CD8-positive, alpha-beta T cell (primary cell): ENCODE measurements at regions of chr9 and their contacts with region 1.

Region 1: DNA sequence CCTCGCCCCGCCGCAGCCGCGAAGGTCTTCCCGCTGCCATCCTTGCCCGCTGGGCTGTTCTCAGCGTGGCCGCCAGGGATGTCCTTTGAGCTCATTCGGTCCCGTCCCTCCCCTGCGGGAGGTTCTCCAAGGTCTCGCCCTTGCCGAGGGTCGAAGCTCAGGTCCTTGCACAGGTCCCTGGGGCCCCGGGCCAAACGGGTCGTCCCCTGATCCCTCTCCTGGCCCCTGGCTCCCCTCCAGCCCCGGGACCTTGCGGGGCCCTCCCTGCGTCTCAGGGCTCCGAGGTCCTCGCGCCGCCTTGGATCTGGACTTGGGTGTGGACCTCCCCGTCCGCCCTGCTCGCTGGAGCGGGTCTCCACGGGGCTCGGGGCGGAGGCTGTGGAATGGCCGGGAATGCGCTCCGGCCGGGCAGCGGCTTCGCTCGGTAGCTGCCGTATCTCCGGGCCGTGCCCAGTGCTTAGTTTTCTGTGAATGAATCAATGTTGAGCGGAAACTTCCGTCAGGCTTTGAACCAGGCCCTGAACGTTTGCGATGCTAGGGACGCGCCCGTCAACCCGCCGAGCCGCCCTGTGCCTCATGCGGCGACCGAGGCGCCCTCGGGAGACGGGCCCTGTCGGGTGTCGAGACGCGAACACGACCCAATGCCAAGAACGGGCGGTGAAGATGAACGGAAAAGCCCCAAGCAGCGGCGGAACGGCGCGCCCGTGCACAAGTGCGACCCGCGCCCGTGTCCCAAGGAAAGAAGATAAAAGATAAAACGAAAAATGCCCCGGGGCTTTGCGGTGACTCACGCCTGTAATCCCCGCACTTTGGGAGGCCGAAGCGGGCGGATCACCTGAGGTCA is 789 bp downstream of the RNU6ATAC start:
- DNase-seq: peak; percentile 38 to 87 (median 68)
- ATAC-seq: peak; percentile 19
- H3K4me3 ChIP-seq: no peak overlapping the region
- H3K4me3 Mint-ChIP-seq: no peak overlapping the region
- H3K27ac ChIP-seq: no peak overlapping the region
- H3K27ac Mint-ChIP-seq: no peak overlapping the region
- H3K4me1 ChIP-seq: peaks cover 18% of the 10 kb centered on the region
- H3K4me1 Mint-ChIP-seq: peaks cover 17% of the 10 kb centered on the region
- H3K27me3 ChIP-seq: no peaks in the 10 kb centered on the region
- H3K27me3 Mint-ChIP-seq: no peaks in the 10 kb centered on the region
- CTCF ChIP-seq: peak; percentile 32

Region 2: GRCh38 chr9:133459476-133460404 is 703.8 kb before region 1 on chr9 and contains the start of gene CACFD1:
- CTCF ChIA-PET with region 1: no interaction called
- POLR2A ChIA-PET with region 1: no interaction called
- intact Hi-C with region 1: loop called in 1 of 2 experiments (anchors 10 kb)
- DNase-seq: peak; percentile 77 to 96 (median 93)
- ATAC-seq: peak; percentile 80
- H3K4me3 ChIP-seq: peak within 1 kb of the TSS; percentile 71 to 76
- H3K4me3 Mint-ChIP-seq: peak within 1 kb of the TSS; percentile 87
- H3K27ac ChIP-seq: peak within 1 kb of the TSS; percentile 74 to 80
- H3K27ac Mint-ChIP-seq: peak within 1 kb of the TSS; percentile 97
- H3K4me1 ChIP-seq: peaks cover 14% of the 10 kb centered on the region
- H3K4me1 Mint-ChIP-seq: peaks cover 12% of the 10 kb centered on the region
- H3K27me3 ChIP-seq: no peaks in the 10 kb centered on the region
- H3K27me3 Mint-ChIP-seq: no peaks in the 10 kb centered on the region
- CTCF ChIP-seq: no peak
- total RNA-seq, gene CACFD1: 7.4 to 9.7 TPM

Region 3: DNA sequence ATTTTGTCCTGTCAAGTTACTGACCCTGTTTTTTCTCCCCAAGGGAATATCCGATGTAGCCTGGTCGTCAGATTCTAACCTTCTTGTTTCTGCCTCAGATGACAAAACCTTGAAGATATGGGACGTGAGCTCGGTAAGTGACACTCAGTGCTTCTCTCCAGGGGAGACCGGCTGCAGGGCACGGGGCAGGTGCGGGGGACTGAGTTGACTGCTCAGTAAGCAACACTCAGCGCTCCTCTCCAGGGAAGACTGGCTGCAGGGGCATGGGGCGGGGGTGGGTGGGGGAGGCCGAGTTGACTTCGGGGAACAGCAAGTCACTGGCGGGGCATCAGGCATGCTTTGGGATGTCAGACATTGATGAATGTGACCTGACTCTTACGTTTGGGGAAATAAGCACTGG is 21.7 kb before region 1 on chr9:
- CTCF ChIA-PET with region 1: interaction called, 11 read pairs
- POLR2A ChIA-PET with region 1: interaction called, 43 read pairs
- intact Hi-C with region 1: no loop called
- DNase-seq: no peak
- ATAC-seq: no peak
- H3K4me3 ChIP-seq: no peak overlapping the region
- H3K4me3 Mint-ChIP-seq: no peak overlapping the region
- H3K27ac ChIP-seq: no peak overlapping the region
- H3K27ac Mint-ChIP-seq: no peak overlapping the region
- H3K4me1 ChIP-seq: peaks cover 25% of the 10 kb centered on the region
- H3K4me1 Mint-ChIP-seq: peaks cover 27% of the 10 kb centered on the region
- H3K27me3 ChIP-seq: no peaks in the 10 kb centered on the region
- H3K27me3 Mint-ChIP-seq: no peaks in the 10 kb centered on the region
- CTCF ChIP-seq: no peak

Region 4: GRCh38 chr9:134391314-134392231 is 228.0 kb after region 1 on chr9:
- CTCF ChIA-PET with region 1: no interaction called
- POLR2A ChIA-PET with region 1: interaction called, 6 read pairs
- intact Hi-C with region 1: loop called in 1 of 2 experiments (anchors 2 kb)
- DNase-seq: peak; percentile 51 to 96 (median 74)
- ATAC-seq: peak; percentile 65
- H3K4me3 ChIP-seq: peak overlapping the region; percentile 41 to 44
- H3K4me3 Mint-ChIP-seq: peak overlapping the region; percentile 77
- H3K27ac ChIP-seq: peak overlapping the region; percentile 92 to 94
- H3K27ac Mint-ChIP-seq: peak overlapping the region; percentile 98
- H3K4me1 ChIP-seq: peaks cover 62% of the 10 kb centered on the region
- H3K4me1 Mint-ChIP-seq: peaks cover 51% of the 10 kb centered on the region
- H3K27me3 ChIP-seq: no peaks in the 10 kb centered on the region
- H3K27me3 Mint-ChIP-seq: no peaks in the 10 kb centered on the region
- CTCF ChIP-seq: no peak

Region 5: GRCh38 chr9:135500525-135501358 is 1337.2 kb after region 1 on chr9 and contains the start of gene MRPS2:
- CTCF ChIA-PET with region 1: no interaction called
- POLR2A ChIA-PET with region 1: no interaction called
- intact Hi-C with region 1: loop called in 1 of 2 experiments (anchors 10 kb)
- DNase-seq: peak; percentile 63 to 90 (median 82)
- ATAC-seq: peak; percentile 93
- H3K4me3 ChIP-seq: peak within 1 kb of the TSS; percentile 62 to 94
- H3K4me3 Mint-ChIP-seq: peak within 1 kb of the TSS; percentile 88
- H3K27ac ChIP-seq: peak within 1 kb of the TSS; percentile 53 to 58
- H3K27ac Mint-ChIP-seq: peak within 1 kb of the TSS; percentile 82
- H3K4me1 ChIP-seq: peaks cover 23% of the 10 kb centered on the region
- H3K4me1 Mint-ChIP-seq: peaks cover 22% of the 10 kb centered on the region
- H3K27me3 ChIP-seq: no peaks in the 10 kb centered on the region
- H3K27me3 Mint-ChIP-seq: no peaks in the 10 kb centered on the region
- CTCF ChIP-seq: peak; percentile 78
- total RNA-seq, gene MRPS2: 29.6 to 31.9 TPM